ENCODE measurements at regions of chr12 and their contacts with region 1.

Region 1: DNA sequence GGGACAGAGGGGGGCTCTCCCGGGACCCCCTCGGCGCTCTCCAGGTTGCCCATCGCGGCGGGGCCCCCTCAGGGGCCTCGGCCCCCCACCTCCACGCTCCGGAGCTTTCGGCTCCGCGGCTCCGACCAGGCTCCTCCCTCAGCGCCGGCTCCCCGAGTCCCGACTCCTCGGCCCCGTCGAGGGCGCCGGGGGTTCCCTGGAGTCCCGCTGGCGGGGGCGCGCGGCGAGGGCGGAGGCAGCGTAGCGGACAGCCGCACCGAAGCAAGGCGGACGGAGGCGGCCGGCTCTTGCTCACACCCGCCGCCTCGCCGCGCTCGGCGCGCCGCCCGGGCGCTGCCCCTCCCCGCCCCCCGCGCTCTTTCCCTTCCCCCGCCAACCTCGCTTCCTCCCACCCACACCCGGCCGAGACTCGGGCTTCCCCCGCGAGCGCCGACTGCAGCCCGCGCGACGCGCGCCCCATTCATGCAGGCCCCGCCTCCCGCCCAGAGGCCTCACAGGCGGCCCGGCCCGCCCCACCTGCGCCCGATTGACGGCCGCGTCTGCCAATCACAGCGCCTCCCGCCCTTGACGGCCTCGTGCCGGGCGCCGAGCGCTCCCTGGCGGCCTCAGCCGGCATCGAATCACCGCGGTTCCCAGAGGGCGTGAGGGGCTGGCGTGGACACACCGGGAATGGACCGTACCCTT is at the start of gene FMNL3:
- DNase-seq: peak; percentile 98
- ATAC-seq: peak; percentile 91
- H3K4me3 Mint-ChIP-seq: peak within 1 kb of the TSS; percentile 86
- H3K27ac Mint-ChIP-seq: peak within 1 kb of the TSS; percentile 86
- H3K4me1 Mint-ChIP-seq: peaks cover 43% of the 10 kb centered on the region
- H3K27me3 Mint-ChIP-seq: peaks cover 12% of the 10 kb centered on the region
- CTCF ChIP-seq: peak; percentile 97
- total RNA-seq, gene FMNL3: 22.8 to 23.5 TPM

Region 2: DNA sequence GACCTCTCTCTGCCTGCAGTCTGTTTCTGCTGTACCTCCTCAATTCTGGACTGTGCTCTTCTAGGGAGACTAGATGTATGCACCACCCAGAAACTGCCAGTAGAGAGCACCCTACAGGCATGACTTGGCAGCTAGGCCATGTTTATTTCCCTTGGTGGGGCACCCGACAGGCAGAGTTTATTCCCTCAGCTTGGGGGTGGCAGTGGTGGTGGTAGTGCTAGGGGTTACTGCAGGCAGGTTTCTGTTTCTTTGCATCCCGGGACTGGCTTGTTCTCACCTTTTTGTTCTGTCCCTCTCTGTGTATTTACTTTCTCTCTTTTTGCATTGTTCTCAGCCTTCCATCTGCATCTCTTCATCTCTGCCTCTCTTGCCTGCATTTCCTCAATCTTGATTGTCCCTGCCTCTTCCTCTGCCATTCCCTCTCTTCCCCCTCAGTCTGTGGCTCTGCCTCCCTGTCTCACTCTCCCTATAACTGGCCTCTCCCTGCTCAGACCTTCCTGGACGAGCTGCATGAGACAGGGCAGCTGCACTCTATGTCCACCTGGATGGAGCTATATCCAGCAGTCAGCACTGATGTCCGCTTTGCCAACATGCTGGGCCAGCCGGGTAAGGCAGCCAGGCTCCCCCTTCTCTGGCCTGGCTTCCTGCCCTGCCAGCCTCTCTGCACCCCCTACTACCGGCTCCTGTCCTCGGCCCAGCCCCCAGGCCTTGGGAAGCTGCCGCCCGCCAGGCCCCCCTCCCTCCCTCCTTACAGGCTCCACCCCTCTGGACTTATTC is 70.1 kb before region 1 on chr12:
- CTCF ChIA-PET with region 1: interaction called, 556 read pairs
- POLR2A ChIA-PET with region 1: interaction called, 9 read pairs
- intact Hi-C with region 1: no loop called
- DNase-seq: peak; percentile 84
- ATAC-seq: peak; percentile 97
- H3K4me3 Mint-ChIP-seq: no peak overlapping the region
- H3K27ac Mint-ChIP-seq: peak overlapping the region; percentile 60
- H3K4me1 Mint-ChIP-seq: peaks cover 18% of the 10 kb centered on the region
- H3K27me3 Mint-ChIP-seq: no peaks in the 10 kb centered on the region
- CTCF ChIP-seq: peak; percentile 67

Region 3: DNA sequence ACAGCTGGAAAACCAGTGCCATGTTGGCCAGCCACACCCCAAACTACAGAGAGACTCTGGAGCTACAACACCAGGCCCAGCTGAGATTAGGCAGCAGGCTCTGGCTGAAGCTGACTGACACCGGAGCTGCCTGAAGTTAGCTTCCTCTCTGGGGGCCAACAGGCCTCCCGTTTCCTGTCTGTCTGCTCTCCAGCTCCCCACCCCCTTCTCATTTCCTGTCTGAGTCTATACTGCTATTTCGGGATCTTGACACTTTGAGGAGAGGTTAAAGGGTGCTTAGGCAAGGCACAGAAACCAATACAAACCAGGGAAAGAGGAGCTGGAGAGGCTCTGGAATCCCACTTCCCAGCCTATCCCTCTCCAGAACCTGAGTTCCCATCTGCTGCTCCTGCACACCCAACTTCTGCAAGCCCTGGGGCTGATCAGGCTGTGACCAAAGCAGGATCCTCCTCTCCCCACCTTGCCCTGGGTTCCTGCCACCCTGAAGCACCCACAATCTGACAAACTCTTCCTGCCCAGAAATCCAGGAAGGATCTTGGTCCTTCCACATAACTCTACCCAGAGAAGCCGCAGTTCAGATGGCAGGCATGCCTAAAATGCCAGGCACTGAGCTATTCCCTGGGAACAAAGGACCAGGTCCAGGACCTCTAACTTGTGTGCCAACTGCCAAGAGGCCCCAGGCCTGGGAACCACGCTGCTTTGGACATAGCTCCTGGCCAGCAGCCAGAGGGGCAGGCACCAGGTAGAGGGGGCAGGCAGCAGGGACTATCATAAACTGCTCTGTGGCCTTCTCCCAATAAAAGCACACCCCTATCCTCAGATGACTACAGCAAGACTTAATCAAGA is 44.0 kb before region 1 on chr12:
- CTCF ChIA-PET with region 1: interaction called, 556 read pairs
- POLR2A ChIA-PET with region 1: interaction called, 24 read pairs
- intact Hi-C with region 1: loop called (anchors 5 kb)
- DNase-seq: peak; percentile 88
- ATAC-seq: peak; percentile 92
- H3K4me3 Mint-ChIP-seq: peak overlapping the region; percentile 67
- H3K27ac Mint-ChIP-seq: peak overlapping the region; percentile 97
- H3K4me1 Mint-ChIP-seq: peaks cover 79% of the 10 kb centered on the region
- H3K27me3 Mint-ChIP-seq: no peaks in the 10 kb centered on the region
- CTCF ChIP-seq: no peak

Region 4: GRCh38 chr12:49687941-49688340 is 19.3 kb before region 1 on chr12:
- CTCF ChIA-PET with region 1: interaction called, 7 read pairs
- POLR2A ChIA-PET with region 1: interaction called, 11 read pairs
- intact Hi-C with region 1: no loop called
- DNase-seq: no peak
- ATAC-seq: no peak
- H3K4me3 Mint-ChIP-seq: no peak overlapping the region
- H3K27ac Mint-ChIP-seq: no peak overlapping the region
- H3K4me1 Mint-ChIP-seq: peaks cover 54% of the 10 kb centered on the region
- H3K27me3 Mint-ChIP-seq: no peaks in the 10 kb centered on the region
- CTCF ChIP-seq: no peak

Region 5: GRCh38 chr12:49763006-49763591 is 55.8 kb after region 1 on chr12:
- CTCF ChIA-PET with region 1: interaction called, 11 read pairs
- POLR2A ChIA-PET with region 1: interaction called, 3 read pairs
- intact Hi-C with region 1: no loop called
- DNase-seq: peak; percentile 89
- ATAC-seq: peak; percentile 56
- H3K4me3 Mint-ChIP-seq: peak overlapping the region; percentile 18
- H3K27ac Mint-ChIP-seq: peak overlapping the region; percentile 86
- H3K4me1 Mint-ChIP-seq: peaks cover 68% of the 10 kb centered on the region
- H3K27me3 Mint-ChIP-seq: no peaks in the 10 kb centered on the region
- CTCF ChIP-seq: peak; percentile 85

Region 6: DNA sequence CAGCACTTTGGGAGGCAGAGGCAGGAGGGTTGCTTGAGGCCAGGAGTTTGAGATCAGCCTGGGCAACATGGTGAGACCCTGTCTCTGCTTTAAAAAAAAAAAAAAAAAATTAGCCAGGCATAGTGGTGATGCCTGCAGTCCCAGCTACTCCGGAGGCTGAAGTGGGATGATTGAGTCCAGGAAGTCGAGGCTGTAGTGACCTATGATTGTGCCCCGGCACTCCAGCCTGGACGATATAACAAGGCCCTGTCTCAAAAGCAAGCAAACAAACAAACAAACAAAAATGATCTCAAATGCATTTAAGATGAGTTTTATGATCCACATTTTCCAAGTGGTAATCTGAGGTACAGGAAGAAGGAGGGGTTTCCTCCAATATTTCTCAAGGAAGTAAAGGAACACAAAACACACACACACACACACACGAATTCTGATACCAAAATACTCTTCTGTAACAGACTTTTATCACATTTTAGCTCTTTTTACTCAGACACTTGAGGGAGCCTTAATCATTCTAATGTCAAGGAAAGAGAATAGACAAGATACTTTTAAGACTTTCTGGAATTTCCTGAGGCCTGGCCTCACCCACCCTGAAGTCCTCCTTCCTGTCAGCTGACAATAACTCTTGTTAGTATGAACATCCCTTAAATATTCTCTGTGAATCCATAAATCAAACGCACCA is 504.3 kb after region 1 on chr12:
- CTCF ChIA-PET with region 1: no interaction called
- POLR2A ChIA-PET with region 1: no interaction called
- intact Hi-C with region 1: no loop called
- DNase-seq: no peak
- ATAC-seq: peak; percentile 42
- H3K4me3 Mint-ChIP-seq: peak overlapping the region; percentile 34
- H3K27ac Mint-ChIP-seq: peak overlapping the region; percentile 90
- H3K4me1 Mint-ChIP-seq: peaks cover 35% of the 10 kb centered on the region
- H3K27me3 Mint-ChIP-seq: no peaks in the 10 kb centered on the region
- CTCF ChIP-seq: no peak

Measured in activated CD8-positive, alpha-beta T cell treated with anti-CD3 and anti-CD28 coated beads for 36 hours (primary cell).